Common myeloid progenitor, CD34-positive (primary cell): ENCODE measurements at regions of chr5 and their contacts with region 1.

Region 1: DNA sequence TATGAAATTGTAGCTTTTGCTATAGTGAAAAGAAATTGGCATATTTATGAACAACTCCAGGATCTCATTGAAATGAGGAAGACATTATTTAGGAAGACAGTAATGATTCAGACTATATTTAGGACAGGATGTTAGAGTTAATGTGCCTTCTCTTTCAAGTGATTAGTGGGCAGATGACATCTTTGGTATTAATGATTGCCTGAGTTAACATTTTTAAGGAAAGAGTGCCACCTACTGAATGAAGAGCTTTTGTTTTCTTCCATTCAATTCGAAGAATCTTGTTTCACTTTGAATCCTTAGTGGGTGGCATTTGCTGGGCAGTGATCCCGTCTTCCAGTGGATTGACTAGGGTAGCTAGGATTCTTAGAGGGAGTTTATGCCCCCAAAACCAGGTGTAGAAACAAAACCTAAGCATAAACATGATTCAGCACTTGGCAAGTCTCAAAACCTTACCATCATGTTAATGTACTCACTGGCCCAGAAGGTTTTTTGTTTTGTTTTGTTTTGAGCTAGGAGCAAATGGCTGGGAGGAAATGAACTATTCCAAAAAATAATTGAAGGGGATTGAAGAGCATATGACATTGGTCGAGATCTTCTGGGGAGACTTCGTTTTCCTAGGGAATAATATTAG is 23.2 kb downstream of the MAP3K1 start:
- DNase-seq: peak; percentile 71 to 81 (median 77)
- H3K4me3 ChIP-seq: peak overlapping the region in 5 of 7 experiments; percentile 20 to 70 (median 41)
- H3K27ac ChIP-seq: peak overlapping the region in 1 of 2 experiments; percentile 31
- H3K4me1 ChIP-seq: peaks cover 11 to 31% (median 19%) of the 10 kb centered on the region in 4 experiments
- H3K27me3 ChIP-seq: no peaks in the 10 kb centered on the region

Region 2: DNA sequence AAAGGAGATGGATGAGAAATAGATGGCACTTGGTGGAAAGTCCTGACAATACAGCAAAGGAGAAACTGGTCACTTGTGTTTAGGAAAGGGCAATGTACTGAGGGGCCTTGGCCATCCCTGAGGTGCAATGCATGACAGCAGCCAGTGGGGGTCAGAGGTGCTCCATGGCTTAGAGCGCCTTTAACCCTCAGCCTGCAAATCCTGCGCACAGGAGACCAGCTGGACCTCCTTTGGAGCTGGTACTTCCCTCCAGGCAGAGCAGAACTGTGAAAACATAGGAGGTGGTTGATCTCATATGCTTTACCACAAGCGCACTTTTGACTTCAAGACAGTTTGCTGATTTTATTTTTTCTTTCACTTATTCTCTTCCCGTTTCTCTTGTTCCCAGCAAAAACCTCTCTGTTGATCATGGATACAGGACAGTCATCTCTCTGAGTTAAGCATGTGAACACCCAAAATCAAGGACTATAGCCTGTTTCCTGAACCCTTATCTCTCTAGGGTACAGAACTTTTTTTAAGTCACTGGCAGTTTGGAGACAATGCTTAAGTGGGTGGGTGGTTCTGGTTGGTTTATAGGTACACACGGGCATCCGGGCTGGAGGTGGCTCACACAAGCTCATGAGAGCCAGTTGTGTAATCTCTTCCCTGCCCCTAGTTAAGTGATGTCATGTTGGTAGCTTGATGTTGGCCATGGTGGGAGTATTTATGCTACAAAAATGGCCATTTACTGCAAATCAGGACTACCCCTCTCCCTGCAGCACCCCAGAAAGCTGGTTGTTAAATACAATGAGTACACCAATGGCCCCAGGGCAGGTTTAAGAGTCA is 567.7 kb before region 1 on chr5:
- CTCF ChIA-PET with region 1: interaction called, 264 read pairs
- POLR2A ChIA-PET with region 1: interaction called, 3 read pairs
- DNase-seq: peak; percentile 78 to 88 (median 87)
- H3K4me3 ChIP-seq: no peak overlapping the region
- H3K27ac ChIP-seq: no peak overlapping the region
- H3K4me1 ChIP-seq: peaks cover 0 to 5% (median 0%) of the 10 kb centered on the region in 4 experiments
- H3K27me3 ChIP-seq: no peaks in the 10 kb centered on the region

Region 3: DNA sequence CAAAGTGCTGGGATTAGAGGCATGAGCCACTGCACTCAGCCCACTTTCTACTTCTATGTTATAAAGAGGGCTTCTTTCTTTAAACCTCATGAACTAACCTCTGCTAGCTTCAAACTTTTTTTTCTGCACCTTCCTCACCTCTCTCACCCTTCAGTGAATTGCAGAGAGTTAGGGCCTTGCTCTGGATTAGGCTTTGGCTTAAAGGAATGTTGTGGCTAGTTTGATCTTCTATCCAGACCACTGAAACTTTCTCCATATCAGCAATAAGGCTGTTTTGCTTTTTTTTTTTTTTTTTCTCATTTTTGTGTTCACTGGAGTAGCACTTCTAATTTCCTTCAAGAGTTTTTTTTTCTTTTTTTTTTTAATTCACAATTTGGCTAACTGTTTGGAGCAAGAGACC is 239.6 kb before region 1 on chr5:
- CTCF ChIA-PET with region 1: no interaction called
- POLR2A ChIA-PET with region 1: no interaction called
- DNase-seq: no peak
- H3K4me3 ChIP-seq: no peak overlapping the region
- H3K27ac ChIP-seq: no peak overlapping the region
- H3K4me1 ChIP-seq: peaks cover 0 to 5% (median 0%) of the 10 kb centered on the region in 4 experiments
- H3K27me3 ChIP-seq: no peaks in the 10 kb centered on the region

Region 4: DNA sequence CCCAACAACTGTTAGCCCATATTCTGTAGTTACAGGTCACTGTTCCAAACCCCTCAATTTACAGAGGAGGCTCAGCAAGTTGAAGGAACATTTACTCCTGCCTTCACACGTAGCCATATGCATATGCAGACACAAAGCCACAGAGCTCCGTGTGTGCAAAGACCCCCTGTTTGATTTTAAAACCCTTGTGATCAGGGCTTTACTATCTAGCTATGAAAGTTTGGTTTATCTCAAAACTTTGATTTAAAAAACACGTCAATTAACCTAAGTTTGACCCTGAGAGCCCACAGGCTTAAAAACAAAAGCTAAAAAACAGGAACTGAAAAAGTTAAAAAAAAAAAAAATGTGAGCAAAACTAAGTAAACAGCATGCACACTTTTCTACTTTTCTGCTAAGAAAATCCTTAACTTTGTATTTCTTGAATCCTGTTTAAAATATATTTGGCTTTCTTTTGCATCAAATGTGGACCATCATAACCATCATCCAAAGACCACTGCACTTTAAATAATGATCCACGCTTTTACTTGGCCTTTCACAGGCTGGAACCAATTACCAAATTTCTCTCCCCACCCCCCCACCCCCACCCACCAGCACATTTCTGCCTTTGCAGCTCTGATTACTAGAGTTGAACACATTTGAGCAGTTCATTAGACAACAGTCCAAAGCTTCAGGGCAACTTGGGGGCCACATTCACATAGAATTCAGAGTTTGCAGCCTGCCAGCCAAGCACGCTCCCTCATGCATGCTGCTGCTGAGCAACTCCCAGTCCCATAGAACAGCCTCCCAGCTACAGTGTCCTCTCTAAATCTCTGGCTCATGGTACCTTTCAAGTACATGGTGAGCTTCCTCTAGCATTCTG is 152.0 kb before region 1 on chr5:
- CTCF ChIA-PET with region 1: no interaction called
- POLR2A ChIA-PET with region 1: no interaction called
- DNase-seq: peak; percentile 23 to 77 (median 69)
- H3K4me3 ChIP-seq: no peak overlapping the region
- H3K27ac ChIP-seq: no peak overlapping the region
- H3K4me1 ChIP-seq: peaks cover 3 to 17% (median 12%) of the 10 kb centered on the region in 4 experiments
- H3K27me3 ChIP-seq: no peaks in the 10 kb centered on the region

Region 5: DNA sequence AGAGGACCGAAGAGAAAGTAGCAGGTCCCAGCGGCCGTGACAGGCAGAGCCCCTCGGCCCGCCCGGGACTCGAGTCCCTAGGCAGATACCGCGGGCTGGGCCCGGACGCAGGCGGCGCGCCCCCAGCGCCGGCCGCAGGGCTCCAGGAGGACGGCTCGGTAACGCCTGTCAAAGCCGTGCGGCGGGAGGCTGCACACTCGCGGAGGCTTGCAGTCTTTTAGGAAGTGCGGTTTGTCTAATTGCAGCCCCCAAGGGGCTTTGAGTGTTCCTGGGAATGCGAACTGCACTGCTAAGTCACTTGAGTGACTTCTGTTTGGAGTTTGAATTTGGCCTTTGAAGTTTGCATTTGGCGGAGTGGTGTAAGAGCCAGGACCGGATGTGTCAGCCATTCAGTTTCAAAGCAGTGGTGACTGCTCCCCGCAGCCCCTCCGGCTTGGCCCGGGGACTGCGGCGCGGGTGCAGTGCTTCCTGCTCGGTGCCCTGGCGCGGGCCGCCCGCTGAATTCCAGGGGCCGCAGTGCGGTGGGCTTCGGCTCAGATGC is 21.9 kb before region 1 on chr5:
- CTCF ChIA-PET with region 1: interaction called, 17 read pairs
- POLR2A ChIA-PET with region 1: no interaction called
- DNase-seq: peak; percentile 61 to 88 (median 81)
- H3K4me3 ChIP-seq: peak overlapping the region; percentile 86 to 98 (median 93)
- H3K27ac ChIP-seq: peak overlapping the region; percentile 64 to 82
- H3K4me1 ChIP-seq: peaks cover 17 to 48% (median 31%) of the 10 kb centered on the region in 4 experiments
- H3K27me3 ChIP-seq: no peaks in the 10 kb centered on the region

Region 6: DNA sequence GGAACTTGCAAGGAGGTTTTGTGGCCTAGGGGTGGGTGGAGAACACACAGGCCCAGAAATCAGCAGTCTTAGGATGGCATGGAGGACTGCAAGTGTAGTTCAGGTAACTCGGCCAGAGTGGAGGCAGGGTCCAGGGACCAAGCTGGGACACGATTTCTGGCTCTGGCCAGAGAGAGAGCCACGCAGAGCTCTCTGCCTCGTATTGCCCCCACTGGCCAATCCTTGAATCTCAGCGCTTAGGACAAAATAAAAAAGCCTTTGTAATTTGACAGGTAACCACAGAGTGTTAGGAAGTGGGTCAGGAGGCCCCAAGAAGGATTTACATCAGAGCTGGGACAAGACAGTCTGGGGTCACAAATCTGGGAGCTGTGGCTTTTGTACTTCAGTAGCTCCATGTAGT is 11.5 kb before region 1 on chr5:
- CTCF ChIA-PET with region 1: interaction called, 30 read pairs
- POLR2A ChIA-PET with region 1: no interaction called
- DNase-seq: peak; percentile 34 to 67 (median 62)
- H3K4me3 ChIP-seq: no peak overlapping the region
- H3K27ac ChIP-seq: no peak overlapping the region
- H3K4me1 ChIP-seq: peaks cover 3 to 32% (median 17%) of the 10 kb centered on the region in 4 experiments
- H3K27me3 ChIP-seq: no peaks in the 10 kb centered on the region

Region 7: DNA sequence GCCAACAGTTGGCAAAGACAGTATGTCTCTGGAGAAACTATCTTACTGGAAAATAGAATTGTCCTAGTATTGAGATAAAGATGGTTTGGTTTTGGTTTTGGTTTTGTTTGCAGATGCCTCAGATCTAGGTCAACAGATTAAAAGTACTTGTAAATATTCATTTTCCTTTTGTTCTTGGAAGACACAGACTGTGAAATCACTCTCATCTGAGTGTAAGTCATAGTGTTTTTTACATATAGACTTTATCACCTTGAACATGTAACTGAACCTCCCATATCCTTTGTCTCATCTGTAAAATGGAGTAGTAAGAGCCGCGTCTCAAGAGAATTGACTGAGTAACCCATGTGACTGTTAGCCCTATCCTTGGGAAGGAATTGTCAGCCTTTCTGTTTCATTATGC is 11.1 kb after region 1 on chr5:
- CTCF ChIA-PET with region 1: interaction called, 18 read pairs
- POLR2A ChIA-PET with region 1: no interaction called
- DNase-seq: no peak
- H3K4me3 ChIP-seq: no peak overlapping the region
- H3K27ac ChIP-seq: no peak overlapping the region
- H3K4me1 ChIP-seq: peaks cover 14 to 33% (median 19%) of the 10 kb centered on the region in 4 experiments
- H3K27me3 ChIP-seq: no peaks in the 10 kb centered on the region

Region 8: GRCh38 chr5:56919942-56920662 is 81.6 kb after region 1 on chr5:
- CTCF ChIA-PET with region 1: no interaction called
- POLR2A ChIA-PET with region 1: no interaction called
- DNase-seq: no peak
- H3K4me3 ChIP-seq: no peak overlapping the region
- H3K27ac ChIP-seq: no peak overlapping the region
- H3K4me1 ChIP-seq: peaks cover 0 to 2% (median 0%) of the 10 kb centered on the region in 4 experiments
- H3K27me3 ChIP-seq: no peaks in the 10 kb centered on the region